ENCODE measurements at regions of chr11 and their contacts with region 1.

Region 1: GRCh38 chr11:119666463-119667131 is 62.4 kb downstream of the NECTIN1 start:
- DNase-seq: no peak
- H3K4me3 ChIP-seq: no peak overlapping the region
- H3K27ac ChIP-seq: no peak overlapping the region
- H3K4me1 ChIP-seq: peaks cover 11 to 19% (median 16%) of the 10 kb centered on the region in 4 donors
- H3K27me3 ChIP-seq: no peaks in the 10 kb centered on the region
- CTCF ChIP-seq: peak; percentile 86 to 96 (median 91)
- EP300 ChIP-seq: no peak
- POLR2A ChIP-seq: no peak

Region 2: DNA sequence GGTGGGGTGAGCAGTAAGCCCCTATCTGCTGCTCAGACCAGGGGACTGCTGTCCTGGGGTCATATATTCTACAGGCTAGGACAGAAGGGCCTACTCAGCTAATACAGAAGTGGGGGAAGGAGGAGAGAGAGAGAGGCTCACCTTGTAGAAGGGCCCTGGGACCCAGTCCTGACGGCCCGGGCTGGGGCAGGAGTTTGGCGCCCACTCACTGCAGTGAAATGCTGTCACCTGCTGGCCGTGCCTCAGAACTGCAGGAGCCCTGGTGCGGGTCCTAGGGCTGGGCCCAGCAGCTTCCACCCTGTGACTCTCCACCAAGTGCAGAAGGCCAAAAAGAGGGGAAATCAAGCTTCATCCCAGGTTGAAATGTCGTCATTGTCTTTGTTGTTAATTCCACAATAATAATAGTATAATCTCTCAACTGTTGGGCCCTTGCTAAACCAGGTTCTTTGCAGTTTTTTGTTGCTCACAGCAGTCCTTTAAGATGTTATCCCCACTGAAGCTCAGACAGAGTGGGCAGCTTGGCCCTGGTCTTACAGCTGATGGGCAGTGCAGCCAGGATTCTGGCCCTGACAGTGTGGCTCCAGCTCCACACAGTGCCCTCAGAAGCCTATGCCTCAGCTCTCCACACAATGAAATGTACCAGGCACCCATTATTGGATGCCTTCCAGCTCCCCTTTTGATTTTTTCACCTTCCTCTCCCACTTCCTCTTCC is 441.7 kb after region 1 on chr11:
- intact Hi-C with region 1: loop called (anchors 1 kb)
- DNase-seq: no peak
- H3K4me3 ChIP-seq: no peak overlapping the region
- H3K27ac ChIP-seq: no peak overlapping the region
- H3K4me1 ChIP-seq: peaks cover 0 to 4% (median 0%) of the 10 kb centered on the region in 4 donors
- H3K27me3 ChIP-seq: peaks cover 0 to 25% (median 0%) of the 10 kb centered on the region in 4 donors
- CTCF ChIP-seq: peak; percentile 94 to 100 (median 98)
- EP300 ChIP-seq: no peak
- POLR2A ChIP-seq: no peak

Measured in esophagus muscularis mucosa (tissue), 4 donors.